ENCODE measurements at regions of chr7 and their contacts with region 1.

Region 1: GRCh38 chr7:2403014-2403717 is at the start of gene CHST12:
- DNase-seq: peak; percentile 95 to 97
- ATAC-seq: peak; percentile 71 to 91 (median 77)
- H3K4me3 ChIP-seq: peak within 1 kb of the TSS; percentile 94
- H3K4me3 Mint-ChIP-seq: peak within 1 kb of the TSS; percentile 96
- H3K27ac ChIP-seq: peak within 1 kb of the TSS; percentile 71
- H3K27ac Mint-ChIP-seq: peak within 1 kb of the TSS; percentile 94 to 95
- H3K4me1 ChIP-seq: peaks cover 66% of the 10 kb centered on the region
- H3K4me1 Mint-ChIP-seq: peaks cover 53 to 57% of the 10 kb centered on the region in 2 donors
- H3K27me3 ChIP-seq: no peaks in the 10 kb centered on the region
- H3K27me3 Mint-ChIP-seq: no peaks in the 10 kb centered on the region
- CTCF ChIP-seq: no peak
- total RNA-seq, gene CHST12: 102 to 159 (median 124) TPM

Region 2: DNA sequence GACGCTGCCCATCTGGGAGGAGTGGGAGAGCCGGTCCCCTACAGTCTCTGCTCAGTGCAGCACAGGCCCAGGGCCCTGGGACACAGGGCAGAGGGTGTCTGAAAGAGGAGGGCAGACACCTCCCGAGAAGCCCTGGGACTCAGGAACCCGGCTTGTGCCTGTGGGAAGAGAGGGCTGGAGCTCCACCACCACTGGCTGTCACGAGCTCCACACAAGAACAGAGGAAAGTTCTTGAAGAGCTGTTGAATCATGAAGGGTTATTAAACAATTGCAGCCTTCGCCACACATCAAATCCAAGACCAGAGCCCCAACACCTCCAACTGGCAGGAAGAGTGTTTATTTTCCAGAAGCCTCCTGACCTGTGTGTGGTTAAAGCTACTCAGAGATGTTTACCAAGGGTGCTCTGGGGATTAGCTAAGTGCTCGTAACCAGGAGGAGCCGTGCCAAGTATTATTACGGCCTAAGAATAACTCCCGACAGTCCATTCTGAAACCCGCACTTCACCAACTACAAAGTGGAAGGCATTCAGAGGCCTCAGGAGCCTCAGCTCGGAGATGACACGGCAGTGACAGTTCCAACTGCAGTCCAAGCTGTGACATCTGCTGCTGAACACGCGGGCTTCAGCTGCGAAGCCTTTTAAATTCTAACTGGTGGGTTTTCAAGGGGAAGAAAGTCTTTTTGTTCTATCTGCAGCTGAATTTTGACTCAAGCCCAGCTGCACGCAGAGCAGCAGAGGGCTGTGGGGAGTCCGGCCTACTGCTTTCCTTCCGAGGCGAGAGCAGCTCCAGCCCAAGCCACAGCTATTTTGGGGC is 245.5 kb before region 1 on chr7:
- intact Hi-C with region 1: no loop called
- DNase-seq: no peak
- ATAC-seq: no peak
- H3K4me3 ChIP-seq: no peak overlapping the region
- H3K4me3 Mint-ChIP-seq: no peak overlapping the region
- H3K27ac ChIP-seq: no peak overlapping the region
- H3K27ac Mint-ChIP-seq: no peak overlapping the region
- H3K4me1 ChIP-seq: no peaks in the 10 kb centered on the region
- H3K4me1 Mint-ChIP-seq: peaks cover 0 to 5% of the 10 kb centered on the region in 2 donors
- H3K27me3 ChIP-seq: no peaks in the 10 kb centered on the region
- H3K27me3 Mint-ChIP-seq: no peaks in the 10 kb centered on the region
- CTCF ChIP-seq: no peak

Region 3: GRCh38 chr7:2354186-2354938 is 48.8 kb before region 1 on chr7 and contains the start of gene EIF3B:
- intact Hi-C with region 1: loop called (anchors 5 kb)
- DNase-seq: peak; percentile 88 to 96
- ATAC-seq: peak; percentile 86 to 95 (median 87)
- H3K4me3 ChIP-seq: peak within 1 kb of the TSS; percentile 80
- H3K4me3 Mint-ChIP-seq: peak within 1 kb of the TSS; percentile 96
- H3K27ac ChIP-seq: peak within 1 kb of the TSS; percentile 99
- H3K27ac Mint-ChIP-seq: peak within 1 kb of the TSS; percentile 99 to 100
- H3K4me1 ChIP-seq: peaks cover 39% of the 10 kb centered on the region
- H3K4me1 Mint-ChIP-seq: peaks cover 32 to 33% of the 10 kb centered on the region in 2 donors
- H3K27me3 ChIP-seq: no peaks in the 10 kb centered on the region
- H3K27me3 Mint-ChIP-seq: no peaks in the 10 kb centered on the region
- CTCF ChIP-seq: no peak
- total RNA-seq, gene EIF3B: 194 to 219 (median 197) TPM

Region 4: GRCh38 chr7:2360796-2361195 is 42.4 kb before region 1 on chr7:
- intact Hi-C with region 1: loop called (anchors 5 kb)
- DNase-seq: no peak
- ATAC-seq: no peak
- H3K4me3 ChIP-seq: no peak overlapping the region
- H3K4me3 Mint-ChIP-seq: no peak overlapping the region
- H3K27ac ChIP-seq: no peak overlapping the region
- H3K27ac Mint-ChIP-seq: peak overlapping the region; percentile 42 to 73
- H3K4me1 ChIP-seq: peaks cover 46% of the 10 kb centered on the region
- H3K4me1 Mint-ChIP-seq: peaks cover 62% of the 10 kb centered on the region in 2 donors
- H3K27me3 ChIP-seq: no peaks in the 10 kb centered on the region
- H3K27me3 Mint-ChIP-seq: no peaks in the 10 kb centered on the region
- CTCF ChIP-seq: no peak

Region 5: DNA sequence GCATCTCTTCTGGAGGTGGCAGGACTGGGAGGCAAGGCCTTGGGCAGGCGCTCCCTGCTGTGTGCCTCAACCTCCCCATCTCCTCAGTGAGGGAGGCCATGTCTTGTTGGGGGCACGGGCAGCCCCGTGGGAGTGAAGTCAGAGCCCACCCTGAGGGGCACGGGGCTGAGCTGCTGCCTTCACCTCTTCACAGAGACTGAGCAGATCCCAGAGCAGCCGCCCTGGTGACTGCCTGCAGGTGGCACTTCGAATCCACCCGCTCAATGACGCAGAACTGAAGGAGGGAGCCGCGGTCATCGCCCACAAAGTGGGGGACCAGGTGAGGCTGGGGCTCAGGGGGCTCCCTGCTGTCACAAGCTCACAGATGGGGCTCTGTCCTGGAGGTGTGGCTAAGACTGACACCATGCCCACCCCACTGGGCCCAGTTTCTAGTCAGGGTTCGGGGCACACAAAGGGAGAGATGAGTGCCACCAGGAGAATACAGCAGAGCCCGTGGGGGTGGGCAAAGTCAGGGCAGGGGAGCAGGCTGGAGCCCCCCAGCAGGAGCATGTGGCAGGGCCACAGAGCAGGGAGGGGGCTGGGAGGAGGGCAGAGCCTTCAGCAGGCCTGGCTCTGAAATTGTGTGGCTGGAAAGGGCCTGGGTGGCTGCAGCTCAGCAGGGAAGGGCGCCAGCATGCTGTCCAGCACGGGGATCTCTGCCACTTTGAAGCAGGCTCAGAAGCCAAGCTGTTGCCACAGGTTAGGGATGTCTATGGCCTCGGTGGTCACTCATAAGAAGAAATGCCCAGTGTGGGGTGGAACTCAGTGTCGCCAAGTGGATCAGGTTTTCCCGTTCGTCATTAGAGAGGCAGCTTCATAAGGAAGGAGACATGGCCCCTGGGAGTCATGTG is 18.6 kb before region 1 on chr7:
- intact Hi-C with region 1: no loop called
- DNase-seq: peak in 1 of 2 donors; percentile 39
- ATAC-seq: peak in 1 of 3 donors; percentile 51
- H3K4me3 ChIP-seq: no peak overlapping the region
- H3K4me3 Mint-ChIP-seq: no peak overlapping the region
- H3K27ac ChIP-seq: no peak overlapping the region
- H3K27ac Mint-ChIP-seq: no peak overlapping the region
- H3K4me1 ChIP-seq: no peaks in the 10 kb centered on the region
- H3K4me1 Mint-ChIP-seq: no peaks in the 10 kb centered on the region
- H3K27me3 ChIP-seq: no peaks in the 10 kb centered on the region
- H3K27me3 Mint-ChIP-seq: no peaks in the 10 kb centered on the region
- CTCF ChIP-seq: no peak

Region 6: DNA sequence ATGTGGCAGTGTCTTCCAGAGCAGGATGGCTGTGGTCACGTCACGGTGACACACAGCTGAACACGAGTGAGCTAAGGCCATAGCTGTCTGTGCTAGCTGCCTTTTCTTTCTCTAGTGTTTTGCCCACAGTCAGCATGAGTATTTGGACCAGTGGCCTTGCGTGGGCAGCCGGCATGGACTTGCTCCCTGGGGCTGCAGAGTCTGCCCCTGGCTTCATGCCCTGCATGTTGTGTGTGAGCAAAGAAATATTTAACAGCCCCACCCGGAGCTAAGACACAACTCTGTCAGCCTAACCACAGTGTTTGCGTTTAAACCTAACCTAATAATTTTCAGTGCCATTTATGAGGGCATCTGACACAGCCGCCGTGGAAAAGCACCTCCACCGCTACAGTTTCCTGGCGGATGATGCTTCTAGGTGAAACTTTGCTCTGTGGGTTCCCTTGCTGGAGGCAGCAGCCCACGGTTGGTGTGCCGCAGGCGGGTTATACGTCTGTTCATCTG is 14.9 kb after region 1 on chr7:
- intact Hi-C with region 1: loop called (anchors 1 kb)
- DNase-seq: peak; percentile 80 to 86
- ATAC-seq: peak; percentile 69 to 89 (median 85)
- H3K4me3 ChIP-seq: no peak overlapping the region
- H3K4me3 Mint-ChIP-seq: peak overlapping the region; percentile 86
- H3K27ac ChIP-seq: peak overlapping the region; percentile 80
- H3K27ac Mint-ChIP-seq: peak overlapping the region; percentile 63 to 93
- H3K4me1 ChIP-seq: peaks cover 91% of the 10 kb centered on the region
- H3K4me1 Mint-ChIP-seq: peaks cover 60 to 63% of the 10 kb centered on the region in 2 donors
- H3K27me3 ChIP-seq: no peaks in the 10 kb centered on the region
- H3K27me3 Mint-ChIP-seq: no peaks in the 10 kb centered on the region
- CTCF ChIP-seq: no peak

Region 7: DNA sequence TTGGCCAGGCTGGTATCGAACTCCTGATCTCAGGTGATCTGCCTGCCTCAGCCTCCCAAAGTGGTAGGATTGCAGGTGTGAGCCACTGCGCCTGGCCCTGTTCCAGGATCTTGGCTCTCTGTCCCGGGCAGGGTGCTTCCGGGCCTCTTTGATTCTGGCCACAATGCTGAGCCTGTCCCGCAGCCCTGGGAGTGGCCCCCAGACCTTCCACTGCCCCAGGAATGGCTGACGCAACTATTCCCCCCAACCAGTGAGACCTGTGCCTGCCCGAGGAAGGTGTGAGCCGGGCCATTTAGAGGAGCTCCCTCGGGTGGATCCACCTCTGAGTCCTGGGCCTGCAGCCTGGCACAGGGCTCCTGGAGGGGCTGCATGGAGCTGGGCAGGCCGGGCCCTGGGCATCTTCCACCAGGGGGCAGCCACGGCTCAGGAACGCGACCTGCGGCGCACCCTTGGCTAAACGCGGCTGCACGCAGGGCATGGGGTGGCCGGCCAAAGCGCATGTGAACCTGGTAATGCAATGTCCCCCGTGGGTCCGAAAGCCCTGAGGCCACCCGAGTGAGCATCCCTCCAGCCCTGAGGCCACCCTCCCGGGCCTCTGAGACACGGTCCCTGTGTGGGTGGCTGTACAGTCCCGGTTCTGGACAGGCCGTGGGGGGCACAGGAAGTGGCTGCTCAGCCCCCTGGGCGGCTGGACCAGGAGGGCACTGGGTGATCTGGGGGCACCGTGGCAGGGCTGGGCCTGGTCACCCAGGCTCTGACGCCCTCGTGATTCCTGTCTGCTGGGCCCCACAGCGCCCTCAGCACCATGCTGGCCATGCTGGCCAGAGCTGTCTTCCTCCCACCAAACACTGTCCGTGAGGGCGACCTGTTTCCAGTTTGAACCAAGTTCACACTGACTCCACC is 48.3 kb after region 1 on chr7:
- intact Hi-C with region 1: loop called (anchors 10 kb)
- DNase-seq: peak; percentile 76 to 84
- ATAC-seq: peak; percentile 83 to 87 (median 85)
- H3K4me3 ChIP-seq: peak overlapping the region; percentile 26
- H3K4me3 Mint-ChIP-seq: peak overlapping the region; percentile 82
- H3K27ac ChIP-seq: no peak overlapping the region
- H3K27ac Mint-ChIP-seq: peak overlapping the region; percentile 75 to 80
- H3K4me1 ChIP-seq: peaks cover 20% of the 10 kb centered on the region
- H3K4me1 Mint-ChIP-seq: peaks cover 23 to 24% of the 10 kb centered on the region in 2 donors
- H3K27me3 ChIP-seq: no peaks in the 10 kb centered on the region
- H3K27me3 Mint-ChIP-seq: no peaks in the 10 kb centered on the region
- CTCF ChIP-seq: peak; percentile 84